MCF 10A (cell line): ENCODE measurements at regions of chr19 and their contacts with region 1.

Region 1: DNA sequence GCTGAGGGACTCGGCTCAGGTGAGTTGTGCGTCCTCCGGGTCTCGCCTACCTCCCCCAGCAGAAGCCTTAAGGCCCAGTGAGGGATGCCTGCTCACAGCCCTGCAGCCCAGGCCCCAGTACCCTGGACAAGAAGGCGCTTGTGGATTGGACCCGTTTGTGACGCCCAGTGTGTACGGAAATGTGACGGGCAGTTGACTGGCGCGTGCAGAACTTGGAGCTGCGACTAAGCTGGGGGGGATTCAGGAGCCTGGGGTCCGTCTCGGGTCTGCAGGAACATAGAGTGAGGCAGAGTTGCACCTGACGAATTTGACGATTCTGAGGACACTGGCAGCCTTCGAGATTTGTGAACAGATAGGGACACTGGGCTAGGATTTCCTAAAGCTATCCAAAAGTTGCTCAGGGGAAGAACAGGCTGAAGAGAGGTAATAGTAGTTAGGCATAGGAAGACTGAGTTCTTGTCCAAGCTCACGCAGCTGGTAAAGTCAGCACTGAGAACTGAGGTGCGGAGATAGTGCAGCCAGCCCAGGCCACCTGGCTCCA is 519 bp downstream of the ZNF551 start:
- DNase-seq: no peak
- H3K4me3 Mint-ChIP-seq: peak overlapping the region; percentile 94
- H3K27ac Mint-ChIP-seq: peak overlapping the region; percentile 88
- H3K4me1 Mint-ChIP-seq: peaks cover 24% of the 10 kb centered on the region
- H3K27me3 Mint-ChIP-seq: no peaks in the 10 kb centered on the region
- CTCF ChIP-seq: no peak

Region 2: GRCh38 chr19:57515234-57515633 is 167.1 kb before region 1 on chr19:
- CTCF ChIA-PET with region 1: no interaction called
- POLR2A ChIA-PET with region 1: no interaction called
- intact Hi-C with region 1: no loop called
- DNase-seq: no peak
- H3K4me3 Mint-ChIP-seq: no peak overlapping the region
- H3K27ac Mint-ChIP-seq: no peak overlapping the region
- H3K4me1 Mint-ChIP-seq: no peaks in the 10 kb centered on the region
- H3K27me3 Mint-ChIP-seq: no peaks in the 10 kb centered on the region
- CTCF ChIP-seq: no peak

Region 3: GRCh38 chr19:57613941-57614743 is 68.2 kb before region 1 on chr19 and contains the start of gene ZNF134:
- CTCF ChIA-PET with region 1: interaction called, 3 read pairs
- POLR2A ChIA-PET with region 1: interaction called, 10 read pairs
- intact Hi-C with region 1: no loop called
- DNase-seq: peak; percentile 89
- H3K4me3 Mint-ChIP-seq: peak within 1 kb of the TSS; percentile 83
- H3K27ac Mint-ChIP-seq: peak within 1 kb of the TSS; percentile 86
- H3K4me1 Mint-ChIP-seq: peaks cover 16% of the 10 kb centered on the region
- H3K27me3 Mint-ChIP-seq: no peaks in the 10 kb centered on the region
- CTCF ChIP-seq: peak; percentile 27
- total RNA-seq, gene ZNF134: 16.4 and 18.8 TPM in 2 replicates

Region 4: DNA sequence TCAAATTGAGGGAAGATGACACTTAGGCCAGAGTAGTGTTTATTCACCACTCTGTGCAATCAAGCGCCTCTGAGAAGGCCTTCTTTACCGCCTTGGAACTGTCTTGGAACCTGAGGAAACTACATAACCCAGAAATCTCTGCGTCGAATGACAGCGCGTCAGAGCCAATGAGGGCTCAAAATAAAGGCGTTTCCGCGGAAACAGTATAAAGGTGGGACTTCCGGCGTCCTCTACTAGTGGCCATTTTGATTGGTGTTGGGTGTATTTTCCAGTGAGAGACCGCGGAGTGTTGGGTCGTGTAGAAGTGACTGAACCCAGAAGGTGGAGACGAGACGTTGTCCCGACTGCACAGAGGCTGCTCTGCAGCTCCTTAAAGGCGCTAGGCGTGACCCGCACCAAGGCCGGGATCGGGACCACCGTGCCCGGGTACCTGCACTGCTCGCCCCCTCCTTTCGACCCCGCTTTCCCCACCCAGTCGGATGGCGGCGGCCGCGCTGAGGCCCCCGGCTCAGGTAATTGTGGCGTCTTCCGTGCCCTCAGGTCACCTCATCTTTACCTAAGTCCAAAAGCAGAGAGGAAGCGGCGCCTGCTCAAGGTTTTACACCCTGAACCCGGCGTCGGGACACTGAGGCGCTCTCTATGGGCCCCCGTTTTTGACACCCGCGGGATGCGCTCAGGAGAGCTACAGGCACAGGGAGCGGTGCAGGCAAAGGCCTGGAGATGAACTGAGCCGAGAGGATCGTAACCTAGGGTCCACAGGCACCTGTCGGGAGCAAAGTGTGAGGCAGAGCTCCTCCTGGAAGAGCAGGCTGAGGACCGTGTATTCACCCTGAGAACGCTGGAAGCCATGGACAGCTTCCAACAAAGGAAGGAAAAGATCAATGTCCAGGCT is 64.5 kb after region 1 on chr19 and contains the start of gene ZNF776:
- CTCF ChIA-PET with region 1: no interaction called
- POLR2A ChIA-PET with region 1: interaction called, 10 read pairs
- intact Hi-C with region 1: no loop called
- DNase-seq: peak; percentile 95
- H3K4me3 Mint-ChIP-seq: peak within 1 kb of the TSS; percentile 99
- H3K27ac Mint-ChIP-seq: peak within 1 kb of the TSS; percentile 99
- H3K4me1 Mint-ChIP-seq: peaks cover 11% of the 10 kb centered on the region
- H3K27me3 Mint-ChIP-seq: no peaks in the 10 kb centered on the region
- CTCF ChIP-seq: no peak
- total RNA-seq, gene ZNF776: 9.9 and 13.3 TPM in 2 replicates

Region 5: DNA sequence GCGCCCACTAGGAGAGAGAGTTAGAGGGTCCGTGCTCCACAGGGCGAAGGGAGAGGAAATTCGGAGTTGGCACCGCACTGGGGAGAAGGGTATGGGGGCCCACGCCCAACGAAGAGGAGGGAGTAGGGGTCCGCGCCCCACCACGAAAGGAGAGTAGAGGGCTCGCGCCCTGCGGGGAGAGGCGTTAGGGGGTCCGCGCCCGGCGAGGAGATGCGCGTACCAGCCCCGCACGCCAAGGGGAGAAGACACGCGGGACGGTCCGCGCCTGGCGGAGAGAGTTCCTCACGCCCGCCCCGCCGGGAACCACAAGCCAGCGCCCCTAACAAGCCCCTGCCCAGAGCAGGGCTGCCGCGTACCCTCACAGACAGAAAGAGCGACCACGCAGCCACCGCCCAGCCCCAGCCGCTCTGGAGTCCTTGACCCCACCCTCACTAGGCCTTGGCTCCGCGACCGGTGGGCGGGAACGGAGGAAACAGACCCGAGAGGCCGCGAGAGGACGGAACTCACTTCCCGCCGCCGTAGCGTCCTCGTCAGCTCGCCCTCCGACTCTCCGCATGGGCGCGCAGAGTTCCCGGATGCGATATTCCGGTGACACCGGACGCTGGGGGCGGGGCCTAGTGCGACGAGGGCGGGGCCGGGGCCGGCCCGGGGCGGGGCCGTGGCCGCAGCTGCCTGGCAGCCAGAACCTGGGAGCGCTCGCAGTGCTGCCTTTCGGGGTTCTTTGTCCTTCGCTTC is 435.7 kb after region 1 on chr19:
- CTCF ChIA-PET with region 1: no interaction called
- POLR2A ChIA-PET with region 1: no interaction called
- intact Hi-C with region 1: no loop called
- DNase-seq: no peak
- H3K4me3 Mint-ChIP-seq: no peak overlapping the region
- H3K27ac Mint-ChIP-seq: no peak overlapping the region
- H3K4me1 Mint-ChIP-seq: no peaks in the 10 kb centered on the region
- H3K27me3 Mint-ChIP-seq: no peaks in the 10 kb centered on the region
- CTCF ChIP-seq: no peak